CD4-positive, alpha-beta memory T cell (primary cell): ENCODE measurements at regions of chr17 and their contacts with region 1.

Region 1: DNA sequence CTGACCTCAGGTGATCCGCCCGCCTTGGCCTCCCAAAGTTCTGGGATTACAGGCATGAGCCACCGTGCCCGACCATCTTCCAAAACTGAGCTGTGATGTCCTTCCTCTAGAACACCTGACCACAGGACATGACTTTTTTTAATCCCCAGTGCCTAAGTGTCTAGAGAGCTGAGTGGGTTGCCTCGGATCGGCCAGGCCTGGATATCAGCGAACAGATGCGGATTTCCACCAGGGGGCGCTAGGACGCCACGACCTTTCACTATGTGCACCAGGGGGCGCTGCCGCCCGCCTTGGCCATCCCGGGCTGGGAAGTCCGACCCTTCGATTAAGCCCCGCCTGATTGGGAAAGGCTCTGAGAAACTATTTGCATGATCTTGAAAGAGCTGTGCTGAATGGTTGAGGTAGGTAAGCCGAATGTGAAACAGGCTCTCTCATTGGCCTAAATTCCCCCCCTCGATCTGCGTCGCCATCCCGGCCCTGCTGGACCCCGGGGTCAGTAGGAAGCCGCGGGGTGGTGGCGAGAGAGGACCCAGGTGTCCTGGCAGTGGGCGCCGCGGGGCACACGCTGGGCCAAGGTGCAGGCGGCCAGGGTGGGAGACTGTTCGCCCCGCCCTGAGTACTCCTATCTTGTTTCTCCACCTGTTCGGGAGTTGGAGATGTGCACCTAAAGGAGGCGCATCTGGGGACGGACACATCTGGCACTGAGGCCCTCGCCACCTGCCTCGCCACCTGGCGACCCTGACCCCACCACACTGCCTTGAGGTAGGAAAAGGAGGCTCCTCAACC is at the start of gene ACBD4:
- DNase-seq: peak; percentile 96 to 97 (median 97)
- H3K4me3 ChIP-seq: peak within 1 kb of the TSS; percentile 90 to 92
- H3K4me3 Mint-ChIP-seq: peak within 1 kb of the TSS; percentile 84 to 94 (median 90)
- H3K27ac ChIP-seq: peak within 1 kb of the TSS; percentile 70
- H3K27ac Mint-ChIP-seq: peak within 1 kb of the TSS; percentile 86 to 94 (median 91)
- H3K4me1 ChIP-seq: peaks cover 25% of the 10 kb centered on the region
- H3K4me1 Mint-ChIP-seq: peaks cover 9 to 37% (median 16%) of the 10 kb centered on the region in 4 donors
- H3K27me3 ChIP-seq: no peaks in the 10 kb centered on the region
- H3K27me3 Mint-ChIP-seq: no peaks in the 10 kb centered on the region
- total RNA-seq, gene ACBD4: 41.9 to 48.1 TPM

Region 2: GRCh38 chr17:44775136-44775837 is 360.1 kb before region 1 on chr17:
- CTCF ChIA-PET with region 1: interaction called, 9 read pairs
- POLR2A ChIA-PET with region 1: no interaction called
- intact Hi-C with region 1: loop called (anchors 1 kb)
- DNase-seq: peak; percentile 94 to 99 (median 96)
- H3K4me3 ChIP-seq: peak overlapping the region; percentile 57 to 73
- H3K4me3 Mint-ChIP-seq: peak overlapping the region; percentile 88 to 97 (median 90)
- H3K27ac ChIP-seq: peak overlapping the region; percentile 30
- H3K27ac Mint-ChIP-seq: peak overlapping the region; percentile 72 to 89 (median 84)
- H3K4me1 ChIP-seq: peaks cover 18% of the 10 kb centered on the region
- H3K4me1 Mint-ChIP-seq: peaks cover 5 to 21% (median 9%) of the 10 kb centered on the region in 4 donors
- H3K27me3 ChIP-seq: no peaks in the 10 kb centered on the region
- H3K27me3 Mint-ChIP-seq: peaks cover 4 to 8% of the 10 kb centered on the region in 2 donors

Region 3: GRCh38 chr17:45038728-45039634 is 96.4 kb before region 1 on chr17:
- CTCF ChIA-PET with region 1: no interaction called
- POLR2A ChIA-PET with region 1: no interaction called
- intact Hi-C with region 1: no loop called
- DNase-seq: no peak
- H3K4me3 ChIP-seq: no peak overlapping the region
- H3K4me3 Mint-ChIP-seq: peak overlapping the region in 1 of 8 donors; percentile 66
- H3K27ac ChIP-seq: no peak overlapping the region
- H3K27ac Mint-ChIP-seq: peak overlapping the region in 2 of 7 donors; percentile 31 to 38
- H3K4me1 ChIP-seq: no peaks in the 10 kb centered on the region
- H3K4me1 Mint-ChIP-seq: peaks cover 3 to 24% (median 8%) of the 10 kb centered on the region in 4 donors
- H3K27me3 ChIP-seq: no peaks in the 10 kb centered on the region
- H3K27me3 Mint-ChIP-seq: no peaks in the 10 kb centered on the region

Region 4: GRCh38 chr17:45073414-45074070 is 61.8 kb before region 1 on chr17:
- CTCF ChIA-PET with region 1: no interaction called
- POLR2A ChIA-PET with region 1: no interaction called
- intact Hi-C with region 1: no loop called
- DNase-seq: no peak
- H3K4me3 ChIP-seq: no peak overlapping the region
- H3K4me3 Mint-ChIP-seq: no peak overlapping the region
- H3K27ac ChIP-seq: no peak overlapping the region
- H3K27ac Mint-ChIP-seq: peak overlapping the region in 2 of 7 donors; percentile 55 to 68
- H3K4me1 ChIP-seq: no peaks in the 10 kb centered on the region
- H3K4me1 Mint-ChIP-seq: peaks cover 19 to 37% (median 25%) of the 10 kb centered on the region in 4 donors
- H3K27me3 ChIP-seq: no peaks in the 10 kb centered on the region
- H3K27me3 Mint-ChIP-seq: no peaks in the 10 kb centered on the region

Region 5: DNA sequence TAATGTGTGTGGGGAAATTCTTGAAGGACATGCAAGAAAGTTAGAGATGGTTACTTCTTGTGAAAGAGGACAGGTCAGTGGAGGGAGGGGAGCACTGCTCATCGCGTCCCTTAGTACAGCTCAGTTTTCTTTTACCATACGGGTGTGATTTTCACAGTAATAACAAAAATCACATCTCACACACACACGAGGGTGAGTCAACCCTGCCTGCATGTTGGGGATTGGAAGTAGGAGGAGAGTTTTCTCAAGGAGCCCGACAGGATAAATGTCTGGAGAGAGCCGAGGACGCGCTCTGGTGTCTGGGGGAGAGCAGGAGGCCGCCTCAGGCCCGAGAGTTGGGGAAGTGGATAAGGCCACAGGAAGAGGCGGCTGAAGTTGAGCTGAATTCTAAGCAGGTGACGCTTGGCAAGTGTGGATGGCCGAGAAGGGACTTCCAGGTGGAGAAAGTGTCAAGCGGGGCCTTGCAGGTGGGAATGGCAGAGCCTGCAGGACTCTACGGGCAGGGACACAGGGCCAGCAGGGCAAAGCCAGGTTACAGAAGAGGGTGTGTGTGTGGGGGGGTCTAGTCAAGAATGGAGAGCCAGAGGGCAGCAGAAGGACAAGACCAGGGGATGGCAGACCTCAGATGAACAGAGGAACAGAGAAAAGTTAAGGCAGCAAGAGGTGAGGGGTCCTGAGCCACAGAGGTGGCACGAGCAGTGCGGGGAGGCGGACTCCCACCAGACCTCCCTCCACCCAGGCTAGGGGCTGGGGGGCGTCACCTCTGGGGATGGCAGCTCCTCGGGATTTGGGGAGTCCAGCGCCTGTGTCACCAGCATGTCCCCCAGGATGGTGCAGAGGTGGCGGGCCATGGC is 19.3 kb before region 1 on chr17:
- CTCF ChIA-PET with region 1: interaction called, 15 read pairs
- POLR2A ChIA-PET with region 1: no interaction called
- intact Hi-C with region 1: no loop called
- DNase-seq: no peak
- H3K4me3 ChIP-seq: no peak overlapping the region
- H3K4me3 Mint-ChIP-seq: peak overlapping the region in 1 of 8 donors; percentile 41
- H3K27ac ChIP-seq: no peak overlapping the region
- H3K27ac Mint-ChIP-seq: no peak overlapping the region
- H3K4me1 ChIP-seq: no peaks in the 10 kb centered on the region
- H3K4me1 Mint-ChIP-seq: no peaks in the 10 kb centered on the region
- H3K27me3 ChIP-seq: no peaks in the 10 kb centered on the region
- H3K27me3 Mint-ChIP-seq: no peaks in the 10 kb centered on the region

Region 6: DNA sequence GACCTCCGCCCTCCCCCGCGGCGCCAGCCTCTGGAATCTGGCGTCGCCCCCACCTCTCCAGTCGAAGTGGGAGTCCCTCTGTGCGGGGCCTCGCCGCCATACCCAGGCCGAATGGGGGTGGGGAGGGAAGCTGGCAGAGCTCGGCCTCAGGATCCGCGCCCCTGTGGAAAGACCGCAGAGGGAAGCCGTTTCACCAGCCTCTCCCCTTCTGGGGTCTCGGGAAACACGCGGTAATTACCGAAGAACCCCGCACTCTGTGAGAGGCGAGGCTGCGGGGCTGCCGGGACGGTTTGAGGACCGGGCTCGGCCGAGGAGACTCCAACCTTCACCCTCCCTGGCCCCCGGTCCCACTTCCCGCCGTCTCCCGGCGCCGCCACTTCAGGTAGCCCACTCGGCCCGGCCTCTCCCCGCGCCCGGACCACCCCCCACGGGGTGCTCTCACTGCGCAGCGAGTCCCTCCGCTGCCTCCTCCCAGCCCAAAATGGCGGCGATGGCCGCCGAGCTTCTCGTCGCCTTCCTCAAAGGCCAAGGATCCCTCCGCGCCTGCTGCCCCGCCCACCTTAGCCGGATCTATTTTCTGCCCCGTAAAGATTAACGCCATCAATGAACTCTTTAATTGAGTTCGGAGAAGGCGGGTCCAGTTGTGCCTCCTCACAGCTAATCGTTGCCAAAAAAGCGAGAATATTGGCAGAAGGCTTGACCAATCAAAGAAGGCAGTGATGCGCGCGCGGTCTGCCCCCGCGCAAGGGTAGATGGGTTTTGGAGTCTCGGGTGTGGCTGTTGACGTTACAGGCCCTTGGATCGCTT is 25.8 kb after region 1 on chr17:
- CTCF ChIA-PET with region 1: interaction called, 552 read pairs
- POLR2A ChIA-PET with region 1: interaction called, 41 read pairs
- intact Hi-C with region 1: loop called (anchors 1 kb)
- DNase-seq: peak; percentile 99 to 100 (median 99)
- H3K4me3 ChIP-seq: peak overlapping the region; percentile 72 to 87
- H3K4me3 Mint-ChIP-seq: peak overlapping the region; percentile 85 to 99 (median 98)
- H3K27ac ChIP-seq: peak overlapping the region; percentile 99
- H3K27ac Mint-ChIP-seq: peak overlapping the region; percentile 90 to 100 (median 98)
- H3K4me1 ChIP-seq: peaks cover 33% of the 10 kb centered on the region
- H3K4me1 Mint-ChIP-seq: peaks cover 19 to 52% (median 39%) of the 10 kb centered on the region in 4 donors
- H3K27me3 ChIP-seq: no peaks in the 10 kb centered on the region
- H3K27me3 Mint-ChIP-seq: no peaks in the 10 kb centered on the region

Region 7: DNA sequence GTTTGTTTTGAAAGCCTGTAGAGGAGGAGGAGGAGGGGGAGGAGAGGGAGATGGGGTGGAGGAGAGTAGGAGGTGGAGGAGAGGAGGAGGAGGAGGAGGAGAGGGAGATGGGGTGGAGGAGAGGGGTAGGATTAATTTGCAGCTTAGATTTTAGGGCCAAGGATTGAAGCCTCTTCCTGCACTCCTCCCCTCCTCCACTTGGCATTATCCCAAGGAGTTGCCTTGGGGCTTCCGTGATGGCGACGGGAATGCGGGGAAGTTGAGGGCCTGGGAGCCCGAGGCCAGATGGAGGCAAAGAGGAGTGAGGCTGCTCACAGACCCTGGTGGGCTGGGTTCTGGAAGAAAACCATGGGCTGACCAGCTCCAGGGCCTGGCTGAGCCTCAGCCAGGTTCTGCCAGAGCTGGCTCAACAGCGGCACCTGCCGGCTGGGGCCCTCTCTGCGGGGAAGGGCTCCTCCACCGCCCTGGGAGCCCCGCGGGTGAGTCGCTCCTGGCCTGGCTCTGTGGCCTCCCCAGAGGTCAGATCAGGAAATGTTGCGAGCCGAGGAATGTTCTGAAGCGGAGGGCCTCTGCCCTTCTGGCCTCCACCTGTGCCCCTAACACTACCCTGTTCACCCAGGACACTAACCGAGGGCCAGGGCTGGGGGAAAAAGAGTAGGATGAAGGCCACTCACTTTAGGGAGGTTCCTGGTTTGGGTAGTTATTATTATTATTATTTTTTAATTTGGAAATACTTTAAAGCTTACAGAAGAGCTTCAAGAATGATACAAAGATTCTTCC is 62.4 kb after region 1 on chr17:
- CTCF ChIA-PET with region 1: interaction called, 300 read pairs
- POLR2A ChIA-PET with region 1: interaction called, 30 read pairs
- intact Hi-C with region 1: loop called (anchors 1 kb)
- DNase-seq: peak; percentile 74 to 84 (median 76)
- H3K4me3 ChIP-seq: no peak overlapping the region
- H3K4me3 Mint-ChIP-seq: no peak overlapping the region
- H3K27ac ChIP-seq: no peak overlapping the region
- H3K27ac Mint-ChIP-seq: no peak overlapping the region
- H3K4me1 ChIP-seq: no peaks in the 10 kb centered on the region
- H3K4me1 Mint-ChIP-seq: peaks cover 0 to 4% (median 2%) of the 10 kb centered on the region in 4 donors
- H3K27me3 ChIP-seq: no peaks in the 10 kb centered on the region
- H3K27me3 Mint-ChIP-seq: no peaks in the 10 kb centered on the region

Region 8: DNA sequence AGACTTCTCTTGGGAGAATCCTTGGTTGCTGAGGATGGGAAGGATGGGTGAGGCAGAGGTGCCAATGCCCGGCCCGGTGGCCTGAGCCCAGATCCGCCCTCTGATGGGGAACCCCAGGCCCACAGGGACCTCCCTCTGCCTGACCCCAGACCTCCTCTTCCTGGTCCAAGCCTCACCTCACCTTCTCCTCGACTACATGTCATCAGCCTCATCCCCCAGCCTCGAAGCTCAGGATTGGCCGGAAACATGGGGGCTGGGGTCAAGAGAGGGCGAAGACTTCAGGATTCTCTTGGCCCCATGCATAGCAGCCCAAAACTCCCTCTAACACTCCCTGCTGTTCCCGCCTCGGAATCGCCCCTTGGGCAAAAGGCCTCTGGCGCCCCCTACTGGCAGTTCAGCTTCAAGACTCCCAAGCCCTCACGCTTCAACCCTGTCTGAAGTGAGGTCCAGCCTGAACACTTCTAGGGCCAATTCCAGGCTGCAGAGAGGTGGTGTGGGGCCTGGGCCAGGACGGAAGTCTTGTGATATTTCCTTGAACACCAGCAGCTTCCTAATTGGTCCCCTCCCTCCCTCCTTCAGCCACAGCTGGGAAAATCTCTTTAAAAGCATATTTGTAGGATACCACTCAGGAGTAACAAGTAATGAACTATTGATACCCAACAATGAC is 250.1 kb after region 1 on chr17:
- CTCF ChIA-PET with region 1: interaction called, 4 read pairs
- POLR2A ChIA-PET with region 1: no interaction called
- intact Hi-C with region 1: loop called (anchors 2 kb)
- DNase-seq: peak; percentile 80 to 86 (median 82)
- H3K4me3 ChIP-seq: no peak overlapping the region
- H3K4me3 Mint-ChIP-seq: peak overlapping the region in 1 of 8 donors; percentile 11
- H3K27ac ChIP-seq: no peak overlapping the region
- H3K27ac Mint-ChIP-seq: peak overlapping the region in 3 of 7 donors; percentile 32 to 68 (median 50)
- H3K4me1 ChIP-seq: peaks cover 4% of the 10 kb centered on the region
- H3K4me1 Mint-ChIP-seq: peaks cover 0 to 6% (median 4%) of the 10 kb centered on the region in 4 donors
- H3K27me3 ChIP-seq: no peaks in the 10 kb centered on the region
- H3K27me3 Mint-ChIP-seq: peaks cover 5 to 9% of the 10 kb centered on the region in 2 donors